IMR-90 (cell line): ENCODE measurements at regions of chr14 and their contacts with region 1.

Region 1: GRCh38 chr14:20613094-20614037 is 22.2 kb upstream of the RNASE12 start:
- DNase-seq: peak; percentile 99
- ATAC-seq: peak; percentile 84
- H3K4me3 ChIP-seq: peak overlapping the region; percentile 80
- H3K27ac ChIP-seq: no peak overlapping the region
- H3K4me1 ChIP-seq: no peaks in the 10 kb centered on the region
- H3K27me3 ChIP-seq: no peaks in the 10 kb centered on the region
- CTCF ChIP-seq: peak; percentile 84
- POLR2A ChIP-seq: no peak
- RAD21 ChIP-seq: 0 out of 2 replicates have a peak, but pooled peaks have one; percentile 15

Region 2: DNA sequence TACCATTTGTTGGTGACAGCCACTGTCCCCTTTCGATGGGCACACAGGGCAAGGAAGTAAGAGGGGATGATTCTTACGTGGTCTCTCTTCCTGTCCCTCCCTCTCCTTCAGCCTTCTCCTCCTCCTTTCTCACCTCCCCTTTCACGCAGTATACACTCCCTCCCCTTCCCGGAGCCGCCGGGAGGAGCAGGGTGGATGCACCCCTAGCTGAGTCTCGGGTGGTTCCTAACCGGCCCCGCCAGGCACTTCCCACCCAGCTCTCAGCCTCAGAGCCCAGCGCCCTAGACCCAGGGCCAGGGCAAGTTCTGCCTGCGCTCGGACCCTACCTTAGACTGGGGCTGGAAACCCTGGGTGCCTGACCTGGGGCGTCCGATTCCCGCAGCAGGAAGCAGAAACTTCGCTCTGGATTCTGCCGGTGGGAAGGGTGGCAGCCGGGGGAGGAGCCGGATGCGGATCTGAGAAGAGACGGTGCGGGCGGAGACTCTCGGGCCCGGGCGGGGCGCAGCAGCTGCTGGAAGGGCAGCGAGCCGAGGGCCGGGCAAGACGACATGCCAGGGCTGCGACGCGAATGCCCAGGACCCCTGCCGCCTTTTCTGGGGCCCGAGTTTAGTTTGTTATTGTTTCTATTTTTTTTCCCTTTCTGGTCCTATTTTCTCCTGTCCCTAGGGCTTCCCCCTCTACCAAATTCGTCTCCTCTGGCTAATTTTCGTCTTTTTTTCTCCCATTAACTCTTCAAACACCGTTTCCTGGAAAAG is 200.1 kb before region 1 on chr14 and contains the start of gene TEP1:
- CTCF ChIA-PET with region 1: interaction called, 7 read pairs
- POLR2A ChIA-PET with region 1: no interaction called
- dilution Hi-C with region 1: no loop called
- in situ Hi-C with region 1: loop called (anchors 5 kb)
- intact Hi-C with region 1: loop called (anchors 1 kb)
- DNase-seq: peak; percentile 79
- ATAC-seq: peak; percentile 93
- H3K4me3 ChIP-seq: peak within 1 kb of the TSS; percentile 79
- H3K27ac ChIP-seq: peak within 1 kb of the TSS; percentile 98
- H3K4me1 ChIP-seq: peaks cover 6% of the 10 kb centered on the region
- H3K27me3 ChIP-seq: 0 out of 2 replicates have a peak, but pooled peaks cover 2% of the 10 kb centered on the region
- CTCF ChIP-seq: no peak
- POLR2A ChIP-seq: peak; percentile 80
- RAD21 ChIP-seq: no peak
- total RNA-seq, gene TEP1: 7.8 and 12.4 TPM in 2 replicates

Region 3: DNA sequence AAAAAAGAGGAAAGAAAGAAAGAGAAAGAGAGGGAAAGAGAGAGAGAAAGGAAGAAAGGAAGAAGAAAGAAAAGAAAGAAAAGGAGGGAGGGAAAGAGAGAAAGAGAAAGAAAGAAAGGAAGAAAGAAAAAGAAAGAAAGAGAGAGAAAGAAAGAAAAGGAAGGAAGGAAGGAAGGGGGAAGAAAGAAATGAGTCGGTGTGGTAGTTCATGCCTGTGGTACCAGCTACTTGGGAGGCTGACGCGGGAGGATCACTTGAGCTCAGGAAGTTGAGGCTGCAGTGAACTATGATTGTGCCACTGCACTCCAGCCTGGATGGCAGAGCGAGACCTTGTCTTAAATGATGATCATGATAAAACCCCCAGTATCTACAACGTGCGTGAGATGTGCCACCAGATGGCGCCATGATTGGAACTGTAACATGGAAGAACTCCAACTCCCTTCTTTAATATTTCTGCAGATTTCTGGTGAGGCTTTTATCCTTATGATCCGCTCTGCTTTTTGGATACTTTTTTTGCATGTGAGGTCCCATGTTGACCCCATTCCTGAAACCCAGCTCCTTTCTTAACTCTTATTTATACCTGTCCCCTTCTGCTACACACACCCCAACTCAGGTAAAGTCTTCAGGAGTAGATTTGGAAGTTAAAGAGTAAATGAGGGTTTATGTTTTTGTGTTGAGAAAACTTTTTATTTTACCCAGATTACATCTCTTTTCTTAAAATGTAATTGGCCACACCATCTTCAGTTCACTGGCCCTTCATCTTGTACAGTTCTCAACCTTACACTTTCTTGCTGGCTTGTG is 82.4 kb before region 1 on chr14:
- CTCF ChIA-PET with region 1: no interaction called
- POLR2A ChIA-PET with region 1: no interaction called
- dilution Hi-C with region 1: no loop called
- in situ Hi-C with region 1: no loop called
- intact Hi-C with region 1: loop called (anchors 2 kb)
- DNase-seq: peak; percentile 69
- ATAC-seq: peak; percentile 84
- H3K4me3 ChIP-seq: no peak overlapping the region
- H3K27ac ChIP-seq: no peak overlapping the region
- H3K4me1 ChIP-seq: no peaks in the 10 kb centered on the region
- H3K27me3 ChIP-seq: peaks cover 1% of the 10 kb centered on the region
- CTCF ChIP-seq: peak; percentile 70
- POLR2A ChIP-seq: no peak
- RAD21 ChIP-seq: peak; percentile 52

Region 4: DNA sequence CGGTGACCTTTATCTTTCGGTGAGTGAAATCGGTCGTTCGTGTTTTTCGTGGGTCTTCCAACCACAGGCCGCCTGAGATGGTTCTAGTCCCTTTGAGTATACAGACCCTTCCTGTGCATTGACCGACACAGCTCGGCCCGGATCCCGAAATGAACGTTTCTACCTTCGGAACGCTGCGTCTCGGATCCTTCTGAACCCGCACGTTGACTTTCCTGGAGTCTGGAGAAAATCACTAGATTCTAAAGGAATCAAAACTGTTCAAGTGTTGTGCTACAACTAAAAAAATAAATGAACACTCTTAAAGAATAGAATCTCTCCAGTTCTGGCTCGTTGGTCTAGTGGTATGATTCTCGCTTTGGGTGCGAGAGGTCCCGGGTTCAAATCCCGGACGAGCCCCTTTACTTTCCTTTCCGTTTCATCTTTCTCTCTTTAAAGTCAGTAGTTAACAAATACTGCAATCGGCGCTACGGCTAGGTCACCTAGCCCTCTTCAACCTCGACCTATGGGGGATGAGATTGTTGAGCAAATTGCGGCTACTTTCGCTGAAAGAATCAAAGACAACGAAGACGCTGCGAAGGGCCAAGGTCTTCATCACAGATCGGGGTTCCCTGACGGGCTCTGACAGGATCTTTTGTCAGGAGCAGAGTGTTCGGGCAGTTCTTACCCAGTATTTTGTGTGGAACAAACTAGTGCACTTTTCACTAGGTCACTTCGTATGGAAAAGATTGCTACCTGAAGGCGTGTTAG is 19.5 kb after region 1 on chr14:
- CTCF ChIA-PET with region 1: interaction called, 3 read pairs
- POLR2A ChIA-PET with region 1: no interaction called
- dilution Hi-C with region 1: no loop called
- in situ Hi-C with region 1: no loop called
- intact Hi-C with region 1: loop called (anchors 2 kb)
- DNase-seq: peak; percentile 85
- ATAC-seq: peak; percentile 82
- H3K4me3 ChIP-seq: peak overlapping the region; percentile 33; the same call in 1 of the 2 replicates
- H3K27ac ChIP-seq: no peak overlapping the region
- H3K4me1 ChIP-seq: no peaks in the 10 kb centered on the region
- H3K27me3 ChIP-seq: peaks cover 4% of the 10 kb centered on the region
- CTCF ChIP-seq: no peak
- POLR2A ChIP-seq: no peak
- RAD21 ChIP-seq: no peak

Region 5: GRCh38 chr14:20690848-20691523 is 77.6 kb after region 1 on chr14:
- CTCF ChIA-PET with region 1: interaction called, 15 read pairs
- POLR2A ChIA-PET with region 1: no interaction called
- dilution Hi-C with region 1: no loop called
- in situ Hi-C with region 1: no loop called
- intact Hi-C with region 1: loop called (anchors 1 kb)
- DNase-seq: peak; percentile 72
- ATAC-seq: peak; percentile 99
- H3K4me3 ChIP-seq: no peak overlapping the region; the same call in 1 of the 2 replicates
- H3K27ac ChIP-seq: no peak overlapping the region
- H3K4me1 ChIP-seq: no peaks in the 10 kb centered on the region
- H3K27me3 ChIP-seq: no peaks in the 10 kb centered on the region
- CTCF ChIP-seq: peak; percentile 88
- POLR2A ChIP-seq: no peak
- RAD21 ChIP-seq: peak; percentile 82